Posterior cingulate gyrus (tissue), 11 donors: ENCODE measurements at regions of chr10 and their contacts with region 1.

Region 1: DNA sequence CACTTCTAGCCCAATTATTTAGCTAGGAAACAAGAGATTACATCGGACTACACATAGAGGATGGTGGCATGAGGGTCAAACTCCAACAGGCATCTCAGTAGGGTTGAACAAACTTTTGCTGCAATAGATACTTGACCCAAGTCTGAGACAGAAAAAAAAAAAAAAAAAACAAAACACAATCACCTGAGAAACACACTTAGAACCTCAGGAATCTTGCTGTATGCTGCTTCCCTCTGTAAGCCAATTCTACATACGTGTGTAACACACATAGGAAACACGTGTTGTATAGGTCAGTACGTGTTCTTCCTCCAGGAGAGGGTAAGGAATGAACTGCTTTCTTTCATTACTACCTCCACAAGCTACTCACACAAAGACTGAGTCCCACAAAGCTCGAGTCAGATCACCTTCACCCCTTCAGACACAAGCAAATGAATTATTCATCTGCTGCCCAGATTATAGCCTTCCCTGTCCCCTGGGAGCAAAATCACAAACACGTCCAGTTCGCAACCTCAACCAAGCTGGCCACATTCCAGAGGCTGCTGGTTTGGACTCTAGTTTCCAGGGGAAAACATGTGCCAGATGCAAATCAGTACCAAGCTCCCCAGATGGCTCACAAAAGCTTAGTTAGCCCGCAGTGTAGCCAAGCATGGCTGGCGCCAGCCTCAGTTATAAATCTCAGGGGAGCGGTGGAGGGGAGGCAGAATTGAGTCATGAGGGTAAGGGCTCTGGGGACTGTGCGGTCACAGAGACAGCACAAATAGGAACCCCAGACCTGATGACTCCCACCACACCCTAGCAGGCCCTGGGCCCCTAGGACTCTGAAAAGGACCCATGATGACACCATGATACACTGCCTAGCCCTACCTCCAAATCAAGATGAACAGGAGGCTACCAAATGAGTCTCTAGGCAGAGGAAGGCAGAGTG is 15.1 kb downstream of the PSAP start:
- DNase-seq: peak; percentile 75 to 96 (median 85)

Region 2: DNA sequence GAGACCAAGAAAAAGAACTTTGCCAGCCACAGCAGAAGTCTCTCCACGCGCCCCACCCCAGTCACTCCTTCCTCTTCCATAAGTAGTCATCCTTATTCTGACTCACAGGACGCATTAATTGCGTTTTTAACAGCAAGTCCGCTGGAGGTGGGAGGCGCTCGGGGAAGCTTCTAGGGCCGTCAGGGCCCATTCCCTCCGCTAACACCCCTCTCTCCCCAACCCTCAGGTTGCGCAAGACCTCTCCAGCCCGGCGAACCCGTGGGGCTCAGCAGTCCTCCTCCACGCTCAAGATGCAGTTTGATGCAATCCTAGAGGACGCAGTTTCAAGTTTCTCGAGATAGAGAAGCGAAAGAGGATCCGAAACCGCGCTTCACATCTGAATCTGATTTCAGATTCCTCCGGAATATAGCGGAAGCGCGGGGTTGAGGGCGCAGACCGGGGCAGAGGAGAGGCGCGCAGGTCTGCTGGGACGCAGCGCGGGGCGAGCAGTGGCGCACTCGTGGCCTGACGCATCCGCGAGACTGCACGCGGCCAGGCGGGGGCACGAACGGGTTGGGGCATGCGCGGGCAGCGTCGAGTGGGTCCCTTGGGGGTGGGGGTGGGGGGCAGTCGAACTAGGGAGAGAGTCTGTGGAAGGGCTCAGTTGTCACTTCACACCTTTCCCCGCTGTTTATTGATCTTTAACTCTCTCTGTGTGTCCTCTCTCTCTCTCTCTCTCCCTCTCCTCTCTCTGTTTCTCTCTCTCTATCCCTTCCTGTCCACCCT is 52.9 kb after region 1 on chr10:
- intact Hi-C with region 1: loop called (anchors 10 kb)
- DNase-seq: peak; percentile 61 to 95 (median 74)